Activated T-helper 1 cell treated with anti-CD3 and anti-CD28 coated beads, Interleukin-12 subunit alpha, Interleukin-12 subunit beta, Interleukin-2, Interleukin-4 antibody, amounts not matched to agents 30 ng/mL and 10 ng/mL and 1 ng/mL, durations not matched to agents 14 hours and 24 hours and 36 hours (primary cell): ENCODE measurements at regions of chr16 and their contacts with region 1.

Region 1: DNA sequence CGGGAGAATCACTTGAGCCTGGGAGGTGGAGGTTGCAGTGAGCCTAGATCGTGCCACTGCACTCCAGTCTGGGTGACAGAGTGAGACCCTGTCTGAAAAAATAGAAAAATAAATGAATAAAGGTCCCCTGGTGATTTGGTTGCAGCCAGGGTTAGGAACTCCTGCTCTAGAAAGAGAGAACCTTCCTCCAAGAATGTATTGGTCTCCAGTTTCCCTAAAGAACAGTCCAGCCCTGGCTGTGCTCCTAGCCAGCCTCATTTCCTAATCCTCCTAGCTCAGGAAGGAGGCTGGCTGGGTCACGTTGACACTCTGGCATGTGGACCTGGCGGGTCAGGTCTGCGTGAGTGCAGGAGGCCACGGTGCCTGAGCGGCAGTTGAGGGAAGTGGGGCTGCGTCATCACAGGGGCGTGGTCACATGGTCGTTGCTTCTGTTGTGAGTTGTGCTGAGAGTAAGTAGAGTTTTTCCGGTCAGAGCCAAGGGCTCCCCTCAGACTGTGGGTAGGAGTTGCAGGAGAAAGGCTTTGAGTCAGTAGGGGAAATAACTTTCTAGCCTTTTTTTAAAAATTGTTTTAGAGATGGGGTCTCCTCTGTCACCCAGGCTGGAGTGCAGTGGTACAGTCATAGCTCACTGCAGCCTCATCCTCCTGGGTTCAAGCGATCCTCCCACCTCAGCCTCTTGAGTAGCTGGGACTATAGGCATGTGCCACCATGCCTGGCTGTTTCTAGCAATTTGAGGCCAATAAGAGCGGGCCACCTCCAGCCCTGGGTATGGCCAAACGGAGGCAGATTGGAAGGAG is 193.9 kb upstream of the CIBAR2 start:
- DNase-seq: peak; percentile 80
- H3K4me3 Mint-ChIP-seq: peak overlapping the region; percentile 55
- H3K27ac Mint-ChIP-seq: peak overlapping the region; percentile 89
- H3K4me1 Mint-ChIP-seq: peaks cover 42% of the 10 kb centered on the region
- H3K27me3 Mint-ChIP-seq: no peaks in the 10 kb centered on the region

Region 2: DNA sequence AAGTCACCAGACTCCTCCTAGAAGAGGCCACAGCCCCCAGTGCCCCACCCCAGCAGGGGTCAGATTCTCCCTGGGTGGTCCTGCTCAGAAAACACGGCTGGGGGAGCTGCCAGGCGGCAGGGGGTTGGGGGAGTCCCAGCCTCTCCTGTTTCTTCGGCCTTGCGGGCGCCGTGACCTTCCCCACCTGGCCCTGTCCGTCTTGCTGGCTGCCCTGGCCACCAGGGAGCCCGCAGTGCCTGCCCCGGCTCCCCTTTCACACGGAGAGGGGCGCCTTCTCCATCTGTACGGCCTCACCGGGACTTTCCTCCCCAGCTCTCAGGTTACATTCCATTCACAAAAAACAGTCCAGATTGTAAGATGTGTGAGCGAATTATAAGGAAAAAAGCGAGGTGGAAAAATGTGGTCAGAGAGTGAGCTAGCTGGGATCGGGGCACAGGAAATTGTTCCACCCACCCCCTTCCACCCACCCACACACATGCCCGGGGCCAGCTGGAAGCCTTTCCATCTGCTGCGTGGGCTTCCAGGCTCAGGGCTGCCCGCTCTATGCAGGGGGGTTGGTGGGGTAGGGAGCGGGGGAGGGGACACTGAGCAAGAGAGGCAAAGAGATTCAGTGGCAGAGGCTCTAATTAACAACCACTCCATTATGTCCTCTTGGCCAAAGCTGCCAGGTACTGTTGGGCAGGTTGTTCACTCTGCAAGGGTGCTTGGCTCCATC is 179.3 kb before region 1 on chr16:
- intact Hi-C with region 1: loop called (anchors 5 kb)
- DNase-seq: no peak
- H3K4me3 Mint-ChIP-seq: no peak overlapping the region
- H3K27ac Mint-ChIP-seq: peak overlapping the region; percentile 63
- H3K4me1 Mint-ChIP-seq: peaks cover 11% of the 10 kb centered on the region
- H3K27me3 Mint-ChIP-seq: no peaks in the 10 kb centered on the region

Region 3: DNA sequence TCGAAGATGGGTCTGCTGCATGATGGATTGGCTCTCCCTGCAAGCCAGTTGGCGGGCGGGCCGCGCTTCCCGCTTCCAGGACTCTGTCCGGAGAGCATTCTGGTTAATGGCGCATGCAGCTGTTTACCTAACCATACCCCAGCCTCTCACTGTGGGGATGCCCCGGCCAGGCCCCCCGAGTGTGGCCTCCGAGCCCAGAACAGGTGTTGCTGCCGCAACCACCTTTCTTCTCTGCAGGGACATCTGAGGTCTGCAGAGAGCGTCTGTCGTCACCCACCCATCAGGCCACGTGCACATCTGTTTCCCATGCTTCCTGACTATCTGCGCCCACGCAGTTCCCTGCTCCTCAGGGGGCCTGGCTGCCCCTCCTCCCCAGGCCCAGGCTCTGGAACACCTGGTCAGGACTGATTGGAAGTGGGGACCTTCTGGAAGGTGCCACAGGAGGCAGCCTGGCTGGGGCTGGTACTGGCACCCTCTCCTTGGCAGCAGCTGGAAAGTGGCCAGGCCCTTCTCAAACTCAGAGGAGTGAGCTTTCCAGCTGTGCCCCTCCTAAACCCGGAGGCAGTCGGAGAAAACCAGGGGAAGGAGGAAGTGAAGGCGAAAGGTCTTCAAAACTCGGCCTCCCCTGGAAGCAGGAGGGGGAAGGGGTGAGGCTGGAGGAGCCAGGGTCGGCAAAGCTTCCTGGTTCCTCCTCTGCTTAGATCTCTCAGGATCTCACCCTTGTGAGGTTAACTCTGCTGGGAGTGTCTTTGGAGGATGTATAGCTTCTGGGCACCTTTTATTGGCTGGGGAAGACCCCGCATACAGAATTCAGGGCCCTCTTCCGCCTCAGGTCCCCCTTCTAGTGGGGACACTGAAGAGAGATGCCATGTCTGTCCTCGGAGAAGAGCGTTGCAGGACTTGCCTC is 129.4 kb before region 1 on chr16:
- intact Hi-C with region 1: no loop called
- DNase-seq: no peak
- H3K4me3 Mint-ChIP-seq: no peak overlapping the region
- H3K27ac Mint-ChIP-seq: no peak overlapping the region
- H3K4me1 Mint-ChIP-seq: no peaks in the 10 kb centered on the region
- H3K27me3 Mint-ChIP-seq: peaks cover 20% of the 10 kb centered on the region

Region 4: GRCh38 chr16:85316321-85316919 is 10.2 kb after region 1 on chr16:
- intact Hi-C with region 1: loop called (anchors 1 kb)
- DNase-seq: peak; percentile 28
- H3K4me3 Mint-ChIP-seq: no peak overlapping the region
- H3K27ac Mint-ChIP-seq: no peak overlapping the region
- H3K4me1 Mint-ChIP-seq: peaks cover 2% of the 10 kb centered on the region
- H3K27me3 Mint-ChIP-seq: no peaks in the 10 kb centered on the region

Region 5: DNA sequence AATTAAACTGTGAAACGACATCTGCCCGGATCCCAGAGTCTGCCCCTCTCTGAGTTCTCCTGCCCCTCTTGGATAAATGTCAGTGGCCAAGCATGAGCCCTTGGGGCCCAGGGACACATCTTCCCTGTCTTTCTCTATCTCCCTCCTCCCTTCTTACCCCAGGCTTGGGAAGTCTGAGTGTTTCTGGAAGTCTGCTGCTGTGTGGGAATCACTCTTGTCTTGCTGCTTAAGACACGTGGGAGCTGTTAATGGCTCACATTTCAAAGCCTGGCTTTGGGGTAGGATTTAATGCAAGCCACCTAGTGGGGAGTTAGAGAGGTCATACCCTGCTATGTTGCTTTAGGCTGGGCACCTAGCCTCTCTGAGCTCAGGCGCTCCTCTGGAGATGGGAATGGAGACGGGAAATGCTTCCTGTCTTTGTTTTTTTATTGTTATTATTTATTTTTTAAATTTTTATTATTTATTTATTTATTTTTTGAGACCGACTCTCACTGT is 24.5 kb after region 1 on chr16:
- intact Hi-C with region 1: loop called (anchors 1 kb)
- DNase-seq: no peak
- H3K4me3 Mint-ChIP-seq: no peak overlapping the region
- H3K27ac Mint-ChIP-seq: no peak overlapping the region
- H3K4me1 Mint-ChIP-seq: no peaks in the 10 kb centered on the region
- H3K27me3 Mint-ChIP-seq: peaks cover 18% of the 10 kb centered on the region

Region 6: DNA sequence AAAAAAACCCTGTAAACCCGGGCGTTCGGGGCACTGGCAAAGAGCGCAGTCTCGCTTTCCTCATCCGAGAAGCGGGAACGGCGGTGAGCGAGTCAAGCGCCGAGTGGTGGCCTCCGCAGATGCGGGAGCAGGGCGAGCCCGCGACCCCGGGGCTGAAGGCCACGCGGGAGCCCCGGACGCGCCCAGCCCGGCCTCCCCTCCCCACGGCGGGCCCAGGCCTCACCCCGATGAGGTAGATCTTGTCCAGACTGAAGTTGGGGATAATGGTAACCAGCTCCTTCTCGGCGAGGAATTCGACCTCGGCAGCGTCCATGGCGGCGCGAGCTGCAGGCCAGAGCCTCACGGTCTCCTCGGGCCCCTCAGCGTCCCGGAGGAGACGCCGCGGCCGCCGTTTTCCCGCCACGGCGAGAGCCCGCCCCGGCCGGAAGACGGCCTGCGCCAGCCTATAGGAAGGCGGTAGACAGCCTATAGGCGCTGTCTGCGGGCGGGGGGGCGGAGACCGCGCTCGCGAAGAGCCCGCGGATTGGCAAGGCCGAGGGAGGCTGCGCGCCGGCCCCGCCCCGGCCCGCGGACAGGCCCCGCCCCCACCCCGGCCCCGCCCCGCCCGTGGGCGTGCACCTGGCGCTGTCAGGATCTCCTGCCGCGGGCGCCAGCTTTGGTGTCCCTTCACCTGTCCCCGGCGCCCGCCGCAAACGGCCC is 382.5 kb after region 1 on chr16 and contains the start of gene GINS2:
- intact Hi-C with region 1: loop called (anchors 5 kb)
- DNase-seq: peak; percentile 89
- H3K4me3 Mint-ChIP-seq: peak within 1 kb of the TSS; percentile 86
- H3K27ac Mint-ChIP-seq: peak within 1 kb of the TSS; percentile 86
- H3K4me1 Mint-ChIP-seq: peaks cover 8% of the 10 kb centered on the region
- H3K27me3 Mint-ChIP-seq: peaks cover 7% of the 10 kb centered on the region
- total RNA-seq, gene GINS2: 87.2 and 91.1 TPM in 2 replicates

Region 7: DNA sequence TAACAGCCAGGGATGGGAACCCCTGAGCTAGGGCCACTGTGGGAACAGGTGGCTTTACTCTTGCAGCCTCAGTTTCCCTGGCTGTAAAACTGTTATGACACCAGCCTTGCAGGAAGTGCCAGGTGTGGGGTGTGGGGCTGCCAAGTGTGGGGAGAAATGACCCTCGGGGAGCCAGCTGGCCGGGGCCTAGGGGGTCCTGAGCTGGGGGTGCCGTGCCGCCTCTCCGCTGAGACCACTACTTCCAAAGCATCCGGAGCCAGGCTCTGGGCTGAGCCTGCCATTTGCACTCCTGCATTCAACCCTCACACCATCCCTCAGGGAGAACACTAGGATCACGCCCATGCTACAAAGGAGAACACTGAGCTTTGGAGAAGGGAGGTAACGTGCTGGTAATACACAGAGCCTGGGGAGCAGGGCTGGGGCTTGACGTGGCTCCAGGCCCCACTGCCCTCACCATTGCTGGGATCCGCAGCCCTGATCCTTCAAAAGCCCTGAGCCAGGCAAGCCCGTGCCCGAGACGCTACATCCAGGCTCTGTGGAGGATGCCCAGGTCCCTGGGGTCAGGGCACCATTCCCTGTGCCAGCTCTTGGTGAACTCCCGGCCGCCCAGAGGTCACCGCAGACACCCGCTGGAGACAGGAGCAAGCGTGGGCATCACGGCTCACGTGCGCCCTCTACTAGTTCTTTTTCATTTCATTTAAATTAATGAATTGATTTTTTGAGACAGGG is 411.4 kb after region 1 on chr16:
- intact Hi-C with region 1: loop called (anchors 10 kb)
- DNase-seq: peak; percentile 34
- H3K4me3 Mint-ChIP-seq: no peak overlapping the region
- H3K27ac Mint-ChIP-seq: no peak overlapping the region
- H3K4me1 Mint-ChIP-seq: no peaks in the 10 kb centered on the region
- H3K27me3 Mint-ChIP-seq: peaks cover 15% of the 10 kb centered on the region